H1 (cell line): ENCODE measurements at regions of chr7 and their contacts with region 1.

Region 1: DNA sequence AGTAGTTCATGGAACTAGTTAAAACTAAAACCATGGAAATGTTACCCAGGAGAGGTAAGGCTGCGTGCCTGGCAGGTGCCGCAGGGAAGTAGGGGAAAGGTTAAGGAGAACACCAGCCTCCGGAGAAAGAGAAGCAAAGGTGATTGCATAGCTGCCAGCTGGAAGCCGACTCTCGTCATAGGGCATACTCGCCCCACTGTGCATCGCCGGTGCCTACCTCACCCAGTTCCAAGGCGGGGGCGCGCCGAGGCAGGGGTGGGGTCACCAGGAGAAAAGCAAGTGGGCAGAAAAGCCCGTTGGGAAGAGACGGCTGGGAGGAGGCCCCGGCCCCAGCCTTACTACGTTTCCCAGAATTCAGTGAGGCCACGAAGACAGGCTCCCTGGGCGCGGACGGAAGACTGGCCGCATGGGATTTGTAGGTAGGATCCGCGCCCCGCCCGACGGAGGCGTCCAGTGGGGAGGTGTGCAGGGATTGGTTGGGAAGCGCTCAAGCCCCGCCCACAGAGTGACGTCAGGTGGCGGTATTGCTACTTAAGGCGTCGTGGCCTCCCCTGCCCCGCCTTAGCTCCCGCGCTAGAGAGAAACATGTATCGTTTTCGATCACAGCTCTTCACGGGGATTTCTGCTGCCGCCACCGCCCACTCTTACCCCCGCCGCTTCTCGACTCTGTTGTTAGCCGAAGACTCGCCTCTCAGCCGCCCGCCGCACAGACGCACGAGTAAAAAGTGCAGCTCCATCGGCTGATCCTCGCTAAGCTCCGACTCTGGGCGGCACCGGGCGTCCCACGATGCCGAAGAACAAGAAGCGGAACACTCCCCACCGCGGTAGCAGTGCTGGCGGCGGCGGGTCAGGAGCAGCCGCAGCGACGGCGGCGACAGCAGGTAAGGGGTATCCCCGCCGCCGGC is at the start of gene IFRD1:
- DNase-seq: peak; percentile 99
- H3K4me3 ChIP-seq: peak within 1 kb of the TSS; percentile 76 to 98 (median 87)
- H3K27ac ChIP-seq: peak within 1 kb of the TSS; percentile 94
- H3K4me1 ChIP-seq: peaks cover 0 to 8% (median under 1%) of the 10 kb centered on the region in 4 experiments; a peak in 2 of 7 replicates
- H3K27me3 ChIP-seq: no peaks in the 10 kb centered on the region
- CTCF ChIP-seq: no peak
- EP300 ChIP-seq: no peak
- POLR2A ChIP-seq: peak; percentile 99
- RAD21 ChIP-seq: no peak
- total RNA-seq, gene IFRD1: 50.4 and 50.5 TPM in 2 replicates

Region 2: DNA sequence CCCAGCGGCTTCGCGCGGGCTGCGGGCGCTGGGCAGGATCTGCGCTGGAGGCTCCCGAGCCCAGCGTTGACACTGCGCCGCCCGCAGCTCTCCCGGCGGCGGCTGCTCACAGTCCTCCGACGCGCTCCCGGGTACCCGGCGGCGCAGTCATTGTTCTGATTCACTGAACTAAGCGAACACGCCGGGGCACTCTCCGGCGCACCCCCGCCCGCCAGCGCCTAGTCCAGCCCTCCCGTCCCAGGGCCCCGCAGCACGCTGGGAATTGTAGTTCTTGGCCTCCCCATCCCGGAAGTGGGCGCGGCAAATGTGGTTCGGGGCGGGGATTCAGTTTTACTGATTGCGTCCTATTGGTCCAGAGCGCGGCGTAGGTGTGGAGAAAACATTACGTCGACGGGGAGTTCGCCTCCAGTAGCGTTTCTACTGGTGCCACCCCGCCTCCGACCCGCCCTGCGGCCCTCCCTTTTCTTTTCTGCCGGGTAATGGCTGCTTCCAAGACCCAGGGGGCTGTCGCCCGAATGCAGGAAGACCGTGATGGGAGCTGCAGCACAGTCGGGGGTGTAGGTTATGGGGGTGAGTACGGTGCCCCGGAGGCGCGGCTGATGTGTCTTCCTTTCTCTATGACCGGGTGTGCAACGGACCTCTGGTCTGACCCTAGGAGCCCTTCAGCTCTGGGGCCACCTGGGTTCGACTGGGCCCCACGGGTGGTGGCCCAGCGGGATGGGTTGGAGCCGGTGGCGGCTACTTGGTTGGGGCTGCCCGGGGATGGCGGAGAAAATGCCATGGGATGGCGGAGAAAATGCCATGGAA is 243.7 kb before region 1 on chr7 and contains the starts of genes DOCK4 and ZNF277:
- CTCF ChIA-PET with region 1: no interaction called
- POLR2A ChIA-PET with region 1: interaction called, 29 read pairs
- DNase-seq: peak; percentile 94 to 99
- H3K4me3 ChIP-seq: peak within 1 kb of the TSS; percentile 93 to 99 (median 95)
- H3K27ac ChIP-seq: peak within 1 kb of the TSS; percentile 61; the same call in 1 of the 2 replicates
- H3K4me1 ChIP-seq: peaks cover 0 to 11% (median 8%) of the 10 kb centered on the region in 4 experiments; a peak in 5 of 7 replicates
- H3K27me3 ChIP-seq: no peaks in the 10 kb centered on the region; a peak in 1 of 7 replicates
- CTCF ChIP-seq: no peak
- EP300 ChIP-seq: peak in 1 of 2 experiments; percentile 50; a peak in 1 of 3 replicates
- POLR2A ChIP-seq: peak in 1 of 2 experiments; percentile 44
- RAD21 ChIP-seq: peak; percentile 8 to 24; a peak in 1 of 4 replicates
- total RNA-seq, gene DOCK4: 23.6 and 26.9 TPM in 2 replicates
- total RNA-seq, gene ZNF277: 18.0 and 21.7 TPM in 2 replicates

Region 3: DNA sequence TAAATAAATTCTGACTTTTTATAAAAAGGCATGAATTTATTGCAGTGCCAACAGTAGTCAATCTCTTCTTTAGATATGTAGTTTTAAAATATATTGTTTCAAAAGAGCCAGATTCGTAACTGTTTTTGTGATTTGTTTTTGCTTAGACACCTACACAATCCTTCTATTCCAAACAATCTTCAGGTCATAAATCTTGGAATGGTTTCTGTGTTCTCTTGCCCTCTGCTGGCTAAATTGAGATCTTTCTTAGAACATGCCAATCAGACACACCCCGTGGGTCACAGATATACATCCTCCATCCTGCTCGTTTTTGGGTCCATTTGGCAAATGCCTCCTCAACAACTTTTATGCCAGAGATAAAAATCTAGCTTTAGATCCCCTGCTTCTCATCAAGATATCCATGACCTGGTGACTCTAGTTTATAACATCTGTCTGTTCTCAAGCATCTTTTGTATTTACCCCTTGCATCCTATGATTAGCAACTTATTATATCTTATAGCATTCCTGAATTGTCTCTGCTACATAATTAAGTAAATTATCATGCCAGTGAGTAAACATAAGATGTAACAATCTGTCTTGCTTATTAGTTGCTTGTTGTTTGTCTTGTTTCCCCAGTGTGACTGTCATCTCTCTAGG is 35.2 kb before region 1 on chr7:
- CTCF ChIA-PET with region 1: interaction called, 4 read pairs
- POLR2A ChIA-PET with region 1: interaction called, 57 read pairs
- DNase-seq: no peak
- H3K4me3 ChIP-seq: no peak overlapping the region
- H3K27ac ChIP-seq: no peak overlapping the region
- H3K4me1 ChIP-seq: peaks cover 0 to 4% (median 2%) of the 10 kb centered on the region in 4 experiments; a peak in 2 of 7 replicates
- H3K27me3 ChIP-seq: no peaks in the 10 kb centered on the region
- CTCF ChIP-seq: peak in 2 of 3 experiments; percentile 54 to 63; a peak in 3 of 4 replicates
- EP300 ChIP-seq: no peak
- POLR2A ChIP-seq: no peak
- RAD21 ChIP-seq: peak; percentile 73

Region 4: GRCh38 chr7:112427984-112428383 is 22.2 kb before region 1 on chr7:
- CTCF ChIA-PET with region 1: interaction called, 3 read pairs
- POLR2A ChIA-PET with region 1: interaction called, 57 read pairs
- DNase-seq: no peak
- H3K4me3 ChIP-seq: no peak overlapping the region
- H3K27ac ChIP-seq: no peak overlapping the region
- H3K4me1 ChIP-seq: peaks cover 0 to 15% (median 1%) of the 10 kb centered on the region in 4 experiments; a peak in 5 of 7 replicates
- H3K27me3 ChIP-seq: no peaks in the 10 kb centered on the region
- CTCF ChIP-seq: no peak
- EP300 ChIP-seq: no peak
- POLR2A ChIP-seq: no peak
- RAD21 ChIP-seq: no peak

Region 5: DNA sequence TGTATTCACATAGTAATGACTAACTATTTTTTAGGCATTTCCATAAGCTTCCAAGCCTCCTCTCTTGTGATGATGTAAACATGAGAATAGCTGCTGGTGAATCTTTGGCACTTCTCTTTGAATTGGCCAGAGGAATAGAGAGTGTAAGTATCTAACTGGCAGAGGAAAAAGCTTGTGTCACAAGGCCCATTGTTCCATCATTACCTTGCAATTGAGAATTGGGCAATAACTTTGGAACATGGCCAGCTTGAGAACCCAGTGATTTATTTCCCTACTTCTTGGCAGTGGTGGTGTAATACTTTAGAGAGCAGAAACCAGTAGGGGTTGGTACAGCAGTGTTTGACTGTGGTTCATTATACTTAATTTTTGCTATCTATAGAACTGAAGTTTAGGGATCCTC is 12.1 kb after region 1 on chr7:
- CTCF ChIA-PET with region 1: interaction called, 16 read pairs
- POLR2A ChIA-PET with region 1: interaction called, 75 read pairs
- DNase-seq: no peak
- H3K4me3 ChIP-seq: no peak overlapping the region
- H3K27ac ChIP-seq: no peak overlapping the region
- H3K4me1 ChIP-seq: no peaks in the 10 kb centered on the region
- H3K27me3 ChIP-seq: no peaks in the 10 kb centered on the region
- CTCF ChIP-seq: no peak
- EP300 ChIP-seq: no peak
- POLR2A ChIP-seq: no peak
- RAD21 ChIP-seq: no peak

Region 6: DNA sequence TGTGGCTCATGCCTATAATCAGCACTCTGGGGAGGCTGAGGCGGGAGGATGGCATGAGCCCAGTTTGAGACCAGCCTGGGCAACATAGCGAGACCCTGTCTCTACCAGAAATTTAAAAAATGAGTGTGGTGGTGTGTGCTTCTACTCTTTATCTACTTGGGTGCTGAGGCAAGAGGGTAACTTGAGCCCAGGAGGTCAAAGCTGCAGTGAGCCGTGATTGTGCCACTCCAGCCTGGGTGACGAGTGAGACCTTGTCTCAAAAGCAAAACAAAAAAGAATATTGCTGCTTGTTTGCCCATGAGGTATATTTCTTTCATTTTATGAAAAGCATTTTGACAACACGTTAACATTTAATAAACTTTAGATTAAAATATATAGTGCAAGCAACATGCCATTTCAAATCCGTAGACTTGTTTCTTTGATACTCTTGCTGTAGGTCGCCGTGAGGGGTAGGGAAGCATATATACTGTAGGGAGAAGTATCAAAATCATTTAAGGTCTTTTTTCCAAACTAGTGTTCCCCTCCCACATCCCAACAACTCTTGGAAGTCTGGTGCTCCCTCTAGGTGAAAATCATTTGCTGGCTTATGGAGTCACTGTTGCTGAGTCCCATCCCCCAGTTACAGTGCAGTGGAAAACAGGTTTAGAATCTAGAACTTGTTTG is 26.4 kb after region 1 on chr7:
- CTCF ChIA-PET with region 1: interaction called, 3 read pairs
- POLR2A ChIA-PET with region 1: interaction called, 22 read pairs
- DNase-seq: no peak
- H3K4me3 ChIP-seq: no peak overlapping the region
- H3K27ac ChIP-seq: no peak overlapping the region
- H3K4me1 ChIP-seq: no peaks in the 10 kb centered on the region
- H3K27me3 ChIP-seq: no peaks in the 10 kb centered on the region
- CTCF ChIP-seq: no peak
- EP300 ChIP-seq: no peak
- POLR2A ChIP-seq: no peak; a peak in 1 of 3 replicates
- RAD21 ChIP-seq: no peak

Region 7: DNA sequence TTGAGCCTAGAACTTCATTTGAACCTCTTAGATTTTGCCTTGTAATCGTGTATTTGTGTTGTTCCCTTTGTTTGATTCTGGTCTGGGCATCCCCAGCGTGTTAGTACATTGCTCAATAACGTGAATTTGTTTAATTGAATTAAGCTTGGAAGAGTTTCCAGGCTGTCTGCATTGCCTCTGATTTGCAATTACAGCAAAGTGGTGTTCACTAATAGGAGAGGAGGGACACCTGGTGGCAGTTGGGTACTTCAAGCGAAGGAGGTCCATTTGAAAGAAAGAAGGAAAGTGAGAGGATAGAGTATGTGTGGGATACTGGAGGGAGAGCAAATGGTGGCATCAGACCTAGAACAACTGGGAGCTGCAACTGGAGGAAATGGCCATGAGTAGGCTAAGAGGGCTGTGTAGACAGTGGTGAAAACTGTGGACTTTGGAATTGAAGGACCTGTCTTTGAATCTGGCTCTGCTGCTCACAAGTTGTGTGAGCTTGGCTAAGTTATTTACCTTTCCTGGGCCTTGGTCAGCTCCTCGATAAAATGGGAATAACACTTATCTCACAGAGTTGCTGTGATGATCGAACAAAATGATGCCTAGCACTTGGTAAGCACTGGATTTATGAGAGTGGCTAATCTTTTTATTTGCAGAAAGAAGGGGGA is 45.8 kb after region 1 on chr7:
- CTCF ChIA-PET with region 1: interaction called, 6 read pairs
- POLR2A ChIA-PET with region 1: interaction called, 11 read pairs
- DNase-seq: peak in 1 of 2 experiments; percentile 23
- H3K4me3 ChIP-seq: no peak overlapping the region
- H3K27ac ChIP-seq: no peak overlapping the region
- H3K4me1 ChIP-seq: no peaks in the 10 kb centered on the region
- H3K27me3 ChIP-seq: no peaks in the 10 kb centered on the region; a peak in 1 of 7 replicates
- CTCF ChIP-seq: peak in 2 of 3 experiments; percentile 71 to 73; a peak in 3 of 4 replicates
- EP300 ChIP-seq: no peak
- POLR2A ChIP-seq: no peak
- RAD21 ChIP-seq: peak; percentile 89 to 94